OCI-LY7 (cell line): ENCODE measurements at regions of chr16 and their contacts with region 1.

Region 1: DNA sequence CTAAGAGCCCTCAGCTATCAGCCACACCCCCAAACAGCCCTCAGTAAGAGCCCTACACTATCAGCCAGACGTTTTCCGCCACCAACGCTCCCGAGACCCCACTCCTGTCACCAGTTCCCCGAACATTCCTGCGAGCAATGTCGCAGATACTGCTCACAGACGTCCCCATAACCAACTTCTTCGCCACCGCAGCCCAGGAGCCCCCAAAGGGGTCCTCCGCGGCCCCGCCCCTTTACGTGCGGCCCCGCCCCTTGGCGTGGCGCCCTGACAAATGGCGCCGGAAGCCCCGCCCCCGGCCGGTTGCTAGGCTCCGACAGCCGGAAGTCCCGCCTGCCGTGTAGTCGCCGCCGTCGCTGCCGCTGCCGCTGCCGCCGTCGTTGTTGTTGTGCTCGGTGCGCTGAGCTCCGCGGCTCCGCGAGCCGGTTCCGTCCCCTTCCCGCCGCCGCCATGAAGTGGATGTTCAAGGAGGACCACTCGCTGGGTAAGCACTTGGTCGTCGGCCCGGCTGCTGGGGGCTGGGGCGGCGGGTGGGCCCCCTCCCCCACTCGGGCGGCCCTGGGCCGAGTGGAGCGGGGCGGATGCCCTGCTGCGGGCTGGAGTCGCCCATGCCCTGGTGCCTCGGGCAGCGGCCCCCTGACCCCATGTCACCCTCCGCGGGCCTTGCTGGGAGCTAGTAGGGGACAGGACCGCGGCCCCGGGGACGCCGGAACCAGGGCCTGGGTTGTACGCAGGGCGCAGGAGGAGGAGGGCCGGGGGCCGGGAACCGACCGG is at the start of gene GABARAPL2:
- DNase-seq: peak; percentile 94
- H3K4me3 ChIP-seq: peak within 1 kb of the TSS; percentile 96
- H3K27ac ChIP-seq: peak within 1 kb of the TSS; percentile 49
- H3K4me1 ChIP-seq: peaks cover 57% of the 10 kb centered on the region
- CTCF ChIP-seq: no peak
- total RNA-seq, gene GABARAPL2: 37.0 and 57.7 TPM in 2 replicates

Region 2: GRCh38 chr16:75432828-75433731 is 133.1 kb before region 1 on chr16 and contains the start of gene CFDP1:
- CTCF ChIA-PET with region 1: no interaction called
- POLR2A ChIA-PET with region 1: interaction called, 4 read pairs
- intact Hi-C with region 1: loop called (anchors 2 kb)
- DNase-seq: peak; percentile 97
- H3K4me3 ChIP-seq: peak within 1 kb of the TSS; percentile 78
- H3K27ac ChIP-seq: no peak within 1 kb of the TSS
- H3K4me1 ChIP-seq: peaks cover 20% of the 10 kb centered on the region
- CTCF ChIP-seq: no peak
- total RNA-seq, gene CFDP1: 30.0 and 55.1 TPM in 2 replicates

Region 3: GRCh38 chr16:75555707-75556430 is 10.4 kb before region 1 on chr16 and contains the start of gene TMEM231:
- CTCF ChIA-PET with region 1: interaction called, 8 read pairs
- POLR2A ChIA-PET with region 1: interaction called, 35 read pairs
- intact Hi-C with region 1: loop called (anchors 1 kb)
- DNase-seq: peak; percentile 95
- H3K4me3 ChIP-seq: peak within 1 kb of the TSS; percentile 85
- H3K27ac ChIP-seq: peak within 1 kb of the TSS; percentile 78
- H3K4me1 ChIP-seq: peaks cover 14% of the 10 kb centered on the region
- CTCF ChIP-seq: 0 out of 2 replicates have a peak, but pooled peaks have one; percentile 20
- total RNA-seq, gene TMEM231: 5.6 and 6.9 TPM in 2 replicates

Region 4: DNA sequence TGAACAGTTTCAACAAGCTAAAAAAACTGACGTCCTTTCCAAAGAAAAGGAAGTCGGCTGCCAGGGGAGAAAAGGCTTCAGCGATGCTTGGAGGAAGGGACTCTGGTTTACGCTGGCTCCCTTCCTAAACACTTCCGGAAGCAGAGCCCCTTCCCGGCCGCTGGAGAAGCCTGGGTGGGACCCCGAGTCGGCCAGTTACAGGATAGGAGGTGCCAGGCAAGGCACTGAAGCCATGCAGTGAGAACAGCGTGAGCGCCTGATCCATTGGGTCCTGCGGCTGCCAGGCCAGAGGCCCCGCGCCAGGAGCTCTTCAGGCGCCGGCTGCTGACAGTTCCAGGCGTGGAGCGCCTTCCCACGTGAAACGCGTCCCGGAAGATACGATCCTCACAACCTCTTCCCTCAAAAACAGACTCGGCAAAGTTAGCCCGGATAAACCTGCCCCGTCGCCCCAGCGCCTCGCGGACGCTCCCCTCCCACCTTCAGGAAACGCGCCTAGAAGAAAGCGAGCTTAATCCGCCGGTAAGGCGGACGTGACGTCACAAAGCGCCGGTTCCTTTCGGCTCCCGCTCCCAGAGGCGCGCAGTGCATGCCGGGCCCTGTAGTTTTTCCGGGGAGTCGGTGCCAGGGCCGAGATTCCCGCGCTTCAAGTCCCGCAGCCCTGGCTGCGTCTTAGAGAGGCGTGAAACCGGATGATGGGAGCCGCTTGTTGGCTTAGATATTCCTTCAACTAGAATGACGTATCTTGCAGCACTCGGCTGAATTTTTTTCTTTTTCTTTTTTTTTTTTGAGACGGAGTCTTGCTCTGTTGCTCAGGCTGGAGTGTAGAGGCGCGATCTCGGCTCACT is 56.8 kb after region 1 on chr16 and contains the start of gene ADAT1:
- CTCF ChIA-PET with region 1: no interaction called
- POLR2A ChIA-PET with region 1: interaction called, 26 read pairs
- intact Hi-C with region 1: no loop called
- DNase-seq: peak; percentile 98
- H3K4me3 ChIP-seq: peak within 1 kb of the TSS; percentile 82
- H3K27ac ChIP-seq: peak within 1 kb of the TSS; percentile 59
- H3K4me1 ChIP-seq: peaks cover 22% of the 10 kb centered on the region
- CTCF ChIP-seq: no peak
- total RNA-seq, gene ADAT1: 46.8 and 53.4 TPM in 2 replicates

Region 5: DNA sequence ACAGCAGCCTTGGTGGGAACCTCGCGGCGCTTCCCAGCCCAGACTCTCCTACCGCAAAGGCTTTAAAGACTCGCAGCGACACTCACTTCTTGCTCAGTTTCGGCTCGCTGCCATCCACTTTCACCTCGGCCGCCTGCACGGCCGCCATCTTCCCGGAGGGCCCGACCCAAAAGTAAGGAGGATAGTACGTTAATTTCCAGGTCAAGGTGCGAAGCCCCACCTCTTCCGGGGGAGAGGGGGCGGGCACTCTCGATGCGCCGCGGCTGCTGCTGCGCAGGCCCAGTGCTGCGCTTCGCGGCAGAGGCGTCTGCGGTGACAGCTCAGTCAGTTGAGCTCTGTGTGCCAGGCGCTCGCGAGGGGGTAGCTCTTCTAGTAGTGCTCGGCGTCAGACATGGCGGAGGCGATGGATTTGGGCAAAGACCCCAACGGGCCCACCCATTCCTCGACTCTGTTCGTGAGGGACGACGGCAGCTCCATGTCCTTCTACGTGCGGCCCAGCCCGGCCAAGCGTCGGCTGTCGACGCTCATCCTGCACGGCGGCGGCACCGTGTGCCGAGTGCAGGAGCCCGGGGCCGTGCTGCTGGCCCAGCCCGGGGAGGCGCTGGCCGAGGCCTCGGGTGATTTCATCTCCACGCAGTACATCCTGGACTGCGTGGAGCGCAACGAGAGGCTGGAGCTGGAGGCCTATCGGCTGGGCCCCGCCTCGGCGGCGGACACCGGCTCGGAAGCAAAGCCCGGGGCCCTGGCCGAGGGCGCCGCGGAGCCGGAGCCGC is 81.5 kb after region 1 on chr16 and contains the starts of genes KARS1 and TERF2IP:
- CTCF ChIA-PET with region 1: interaction called, 6 read pairs
- POLR2A ChIA-PET with region 1: interaction called, 15 read pairs
- intact Hi-C with region 1: no loop called
- DNase-seq: peak; percentile 93
- H3K4me3 ChIP-seq: peak within 1 kb of the TSS; percentile 88
- H3K27ac ChIP-seq: peak within 1 kb of the TSS; percentile 82
- H3K4me1 ChIP-seq: peaks cover 57% of the 10 kb centered on the region
- CTCF ChIP-seq: no peak
- total RNA-seq, gene KARS1: 126 and 143 TPM in 2 replicates
- total RNA-seq, gene TERF2IP: 41.6 and 42.3 TPM in 2 replicates

Region 6: DNA sequence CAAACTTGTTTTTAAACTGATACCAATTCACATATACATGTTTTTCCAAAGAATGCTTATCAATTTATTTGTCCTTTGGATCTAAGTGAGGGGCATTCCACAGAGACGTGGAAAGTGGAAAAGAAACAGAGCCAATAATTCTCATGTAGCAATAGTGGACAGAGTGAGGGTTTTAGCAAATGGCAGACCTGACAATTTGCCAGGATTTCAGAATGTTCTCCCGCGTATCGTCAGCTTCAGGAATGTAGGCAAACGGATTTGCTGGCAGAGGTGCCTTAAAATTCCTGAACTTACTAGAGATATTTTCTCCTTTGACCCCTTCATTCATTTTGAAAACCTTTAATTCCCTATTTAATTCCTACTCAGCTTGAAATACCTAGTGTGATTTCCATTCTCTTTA is 353.4 kb after region 1 on chr16:
- CTCF ChIA-PET with region 1: no interaction called
- POLR2A ChIA-PET with region 1: no interaction called
- intact Hi-C with region 1: no loop called
- DNase-seq: no peak
- H3K4me3 ChIP-seq: no peak overlapping the region
- H3K27ac ChIP-seq: no peak overlapping the region
- H3K4me1 ChIP-seq: no peaks in the 10 kb centered on the region
- CTCF ChIP-seq: no peak